GM18951 (cell line): ENCODE measurements at regions of chr13 and their contacts with region 1.

Region 1: GRCh38 chr13:79427265-79427664 is 21.2 kb upstream of the RBM26 start:
- POLR2A ChIP-seq: no peak

Region 2: DNA sequence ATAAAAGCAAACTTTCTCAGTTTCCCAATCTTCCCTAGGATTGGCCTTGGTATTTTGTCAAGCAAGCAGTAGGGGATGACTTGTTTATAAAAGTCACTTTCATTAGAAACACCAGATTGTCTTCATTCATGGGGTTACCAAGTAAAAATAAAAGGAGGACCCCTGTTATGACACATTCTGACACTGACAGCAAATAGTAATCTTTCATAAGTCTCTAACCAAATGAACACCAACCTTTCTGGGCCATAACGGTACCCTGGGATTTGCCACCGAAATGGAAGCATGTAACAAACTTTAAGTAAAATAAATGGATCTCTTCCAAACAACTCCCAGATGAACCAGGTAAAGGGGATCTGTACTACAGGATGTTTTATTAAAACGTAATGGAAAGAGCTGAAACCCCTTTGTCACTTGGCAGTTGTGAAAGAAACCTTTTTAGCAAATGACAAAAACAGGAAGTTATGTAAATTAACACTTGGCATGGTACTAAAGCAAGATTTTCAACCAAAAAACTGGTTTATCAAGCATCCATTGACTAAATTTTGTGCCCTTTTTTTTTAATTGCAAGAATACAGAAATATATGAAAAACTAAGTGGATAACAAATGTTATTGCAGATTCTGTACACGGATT is 356.8 kb before region 1 on chr13:
- in situ Hi-C with region 1: no loop called
- POLR2A ChIP-seq: no peak

Region 3: DNA sequence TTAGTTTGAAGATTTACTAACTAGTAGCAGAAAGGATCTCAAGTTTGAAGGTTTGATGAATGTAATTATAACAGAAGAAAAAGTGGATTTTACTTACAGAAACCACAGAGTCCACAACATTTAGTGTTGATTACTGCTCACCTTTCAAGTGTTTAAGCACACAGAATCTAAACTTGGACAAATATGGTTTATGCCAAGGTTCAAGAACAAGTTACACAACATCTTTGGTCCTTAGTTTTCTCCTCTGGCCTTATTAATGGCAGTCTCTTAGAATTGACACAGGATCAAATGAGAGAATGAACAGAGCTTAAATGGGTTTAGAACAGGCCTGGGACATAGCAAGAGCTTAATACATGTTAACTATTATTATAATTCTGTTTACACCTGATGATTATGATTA is 154.2 kb before region 1 on chr13:
- in situ Hi-C with region 1: no loop called
- POLR2A ChIP-seq: no peak

Region 4: GRCh38 chr13:79533781-79534400 is 106.6 kb after region 1 on chr13:
- in situ Hi-C with region 1: loop called (anchors 5 kb)
- POLR2A ChIP-seq: no peak

Region 5: GRCh38 chr13:79548902-79549301 is 121.6 kb after region 1 on chr13:
- in situ Hi-C with region 1: no loop called
- POLR2A ChIP-seq: no peak